Lower leg skin (tissue), 4 donors: ENCODE measurements at regions of chr13 and their contacts with region 1.

Region 1: GRCh38 chr13:72205773-72206172 is 338.8 kb upstream of the DACH1 start:
- DNase-seq: no peak
- H3K4me3 ChIP-seq: no peak overlapping the region
- CTCF ChIP-seq: no peak
- POLR2A ChIP-seq: no peak

Region 2: GRCh38 chr13:70534466-70534865 is 1671.3 kb before region 1 on chr13:
- intact Hi-C with region 1: loop called (anchors 5 kb)
- DNase-seq: no peak
- H3K4me3 ChIP-seq: no peak overlapping the region
- CTCF ChIP-seq: no peak
- POLR2A ChIP-seq: no peak

Region 3: GRCh38 chr13:72221276-72221962 is 15.6 kb after region 1 on chr13:
- intact Hi-C with region 1: no loop called
- DNase-seq: peak in 1 of 2 donors; percentile 82
- H3K4me3 ChIP-seq: no peak overlapping the region
- CTCF ChIP-seq: no peak
- POLR2A ChIP-seq: no peak

Region 4: DNA sequence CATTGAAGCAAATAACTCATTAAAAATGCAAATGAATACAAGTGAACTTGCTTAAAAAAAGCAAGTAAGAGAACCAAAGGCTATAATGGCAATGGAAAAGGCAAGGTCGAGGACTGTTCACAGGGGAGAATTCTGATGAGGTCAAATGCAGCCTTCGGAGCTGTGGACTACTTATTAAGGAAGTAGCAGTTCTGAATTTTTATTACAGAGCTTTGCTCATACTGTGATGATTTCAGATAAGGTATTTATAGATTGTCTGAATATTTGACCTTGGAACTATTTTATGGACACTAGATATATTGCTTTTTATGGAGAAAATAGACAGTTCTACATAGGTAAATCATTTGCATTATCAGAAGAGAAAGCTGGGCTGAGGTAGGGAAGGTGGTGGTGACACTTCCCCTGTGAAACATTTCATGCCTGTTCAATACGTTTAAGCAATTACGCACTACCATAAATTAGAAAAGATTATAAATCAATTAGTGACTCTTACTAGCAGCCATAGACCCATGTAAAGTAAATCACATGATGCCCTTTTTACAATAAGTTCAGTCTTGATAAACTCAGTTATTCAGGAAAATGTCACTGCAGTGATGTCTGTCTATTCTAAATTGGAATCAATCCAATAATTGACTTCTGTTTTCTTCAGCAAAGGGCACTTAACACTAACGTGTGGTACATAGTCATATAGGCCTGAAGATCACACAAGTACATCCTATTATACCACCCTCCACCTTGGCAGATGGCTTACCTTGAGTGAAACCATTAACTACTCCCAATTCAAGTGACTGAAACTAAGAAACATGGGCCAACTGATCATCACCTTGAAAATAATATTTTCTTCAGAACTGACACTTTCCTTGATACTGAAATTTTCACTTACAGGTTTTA is 1668.4 kb after region 1 on chr13:
- intact Hi-C with region 1: no loop called
- DNase-seq: no peak
- H3K4me3 ChIP-seq: no peak overlapping the region
- CTCF ChIP-seq: no peak
- POLR2A ChIP-seq: no peak